GM12878 (cell line): ENCODE measurements at regions of chr11 and their contacts with region 1.

Region 1: GRCh38 chr11:119728651-119729580 is at the start of gene NECTIN1:
- DNase-seq: no peak
- ATAC-seq: peak; percentile 86
- H3K4me3 ChIP-seq: peak within 1 kb of the TSS; percentile 86
- H3K27ac ChIP-seq: peak within 1 kb of the TSS; percentile 58
- H3K4me1 ChIP-seq: peaks cover 24% of the 10 kb centered on the region
- H3K27me3 ChIP-seq: peaks cover 0 to 7% of the 10 kb centered on the region in 2 experiments; a peak in 2 of 4 replicates
- CTCF ChIP-seq: peak; percentile 69 to 94 (median 84)
- EP300 ChIP-seq: no peak
- POLR2A ChIP-seq: peak; percentile 77
- RAD21 ChIP-seq: peak; percentile 83
- polyA plus RNA-seq, gene NECTIN1: 1.4 to 1.5 TPM

Region 2: GRCh38 chr11:119599864-119600541 is 128.9 kb before region 1 on chr11:
- CTCF ChIA-PET with region 1: no interaction called
- POLR2A ChIA-PET with region 1: no interaction called
- RAD21 ChIA-PET with region 1: no interaction called
- SMC1A ChIA-PET with region 1: no interaction called
- in situ Hi-C with region 1: no loop called
- intact Hi-C with region 1: no loop called
- DNase-seq: no peak
- ATAC-seq: no peak; the same call in 1 of the 3 replicates
- H3K4me3 ChIP-seq: no peak overlapping the region
- H3K27ac ChIP-seq: no peak overlapping the region
- H3K4me1 ChIP-seq: no peaks in the 10 kb centered on the region
- H3K27me3 ChIP-seq: peaks cover 0 to 2% of the 10 kb centered on the region in 2 experiments; a peak in 2 of 4 replicates
- CTCF ChIP-seq: no peak
- EP300 ChIP-seq: no peak
- POLR2A ChIP-seq: no peak
- RAD21 ChIP-seq: no peak

Region 3: DNA sequence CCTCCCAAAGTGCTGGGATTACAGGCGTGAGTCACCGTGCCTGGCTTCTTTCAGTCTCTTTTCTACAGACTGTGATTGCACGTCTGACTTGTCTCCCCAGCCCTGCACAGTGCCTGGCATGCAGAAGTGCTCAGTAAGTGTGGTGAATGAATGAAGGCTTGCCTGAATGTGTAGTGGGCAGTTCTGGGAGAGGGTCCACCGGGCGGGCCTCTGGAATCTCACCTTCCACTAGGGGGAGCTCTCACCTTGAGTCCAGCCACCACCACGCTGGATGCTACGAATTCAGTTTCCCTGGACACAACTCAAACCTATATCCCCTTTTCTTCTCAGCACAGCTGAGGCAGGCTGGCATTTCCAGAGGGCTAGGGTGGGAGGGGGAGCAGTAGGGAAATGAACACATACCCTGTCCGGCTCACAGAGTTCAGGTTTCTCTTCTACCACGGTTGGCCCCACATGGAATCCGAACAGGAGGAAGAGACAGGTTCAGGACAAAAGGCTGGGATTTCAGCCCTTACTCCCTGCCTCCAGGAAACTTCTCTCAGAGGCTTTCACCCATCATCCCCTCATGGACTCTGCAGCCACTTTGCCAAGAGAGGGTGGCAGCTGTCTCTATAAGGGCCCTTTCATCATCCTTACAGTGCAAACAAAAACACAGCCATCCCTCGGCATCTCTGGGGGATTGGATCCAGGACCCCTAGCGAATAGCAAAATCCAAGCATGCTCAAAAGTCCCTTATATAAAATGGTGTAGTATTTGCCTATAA is 86.8 kb before region 1 on chr11:
- CTCF ChIA-PET with region 1: interaction called, 9 read pairs
- POLR2A ChIA-PET with region 1: no interaction called
- RAD21 ChIA-PET with region 1: interaction called, 12 read pairs
- SMC1A ChIA-PET with region 1: no interaction called
- in situ Hi-C with region 1: no loop called
- intact Hi-C with region 1: no loop called
- DNase-seq: no peak
- ATAC-seq: peak; percentile 83
- H3K4me3 ChIP-seq: no peak overlapping the region
- H3K27ac ChIP-seq: no peak overlapping the region
- H3K4me1 ChIP-seq: no peaks in the 10 kb centered on the region
- H3K27me3 ChIP-seq: peaks cover 3% of the 10 kb centered on the region in 2 experiments; a peak in 3 of 4 replicates
- CTCF ChIP-seq: peak; percentile 63 to 75 (median 67)
- EP300 ChIP-seq: no peak
- POLR2A ChIP-seq: no peak
- RAD21 ChIP-seq: peak; percentile 49

Region 4: GRCh38 chr11:119673759-119674336 is 55.1 kb before region 1 on chr11:
- CTCF ChIA-PET with region 1: interaction called, 214 read pairs
- POLR2A ChIA-PET with region 1: interaction called, 74 read pairs
- RAD21 ChIA-PET with region 1: interaction called, 192 read pairs
- SMC1A ChIA-PET with region 1: interaction called, 76 read pairs
- in situ Hi-C with region 1: no loop called
- intact Hi-C with region 1: loop called (anchors 1 kb)
- DNase-seq: peak; percentile 88
- ATAC-seq: peak; percentile 95
- H3K4me3 ChIP-seq: no peak overlapping the region
- H3K27ac ChIP-seq: peak overlapping the region; percentile 85
- H3K4me1 ChIP-seq: peaks cover 29% of the 10 kb centered on the region
- H3K27me3 ChIP-seq: no peaks in the 10 kb centered on the region
- CTCF ChIP-seq: peak; percentile 54 to 96 (median 67); a peak in 4 of 6 replicates
- EP300 ChIP-seq: peak; percentile 71 to 96
- POLR2A ChIP-seq: peak; percentile 62; the same call in 1 of the 2 replicates
- RAD21 ChIP-seq: peak; percentile 85

Region 5: DNA sequence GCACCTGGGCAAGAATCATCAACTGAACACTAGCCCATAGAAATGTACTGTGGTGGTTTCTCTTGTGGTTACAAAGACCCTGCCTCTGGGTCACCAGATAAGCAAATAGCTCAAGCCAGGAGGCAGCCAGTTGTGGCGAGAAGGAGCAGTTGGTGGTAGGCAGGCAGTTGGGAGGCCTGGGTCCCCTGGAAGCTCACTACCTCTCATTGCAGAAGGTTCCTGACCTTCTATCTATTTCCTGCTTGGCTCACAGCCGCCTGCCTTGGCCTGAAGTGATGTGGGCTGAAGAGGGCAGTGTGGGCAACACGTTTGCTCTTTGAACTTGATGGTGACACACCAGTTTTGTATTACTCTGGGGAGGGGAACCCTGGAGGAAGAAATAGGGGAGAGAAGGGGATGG is 34.6 kb before region 1 on chr11:
- CTCF ChIA-PET with region 1: interaction called, 57 read pairs
- POLR2A ChIA-PET with region 1: interaction called, 9 read pairs
- RAD21 ChIA-PET with region 1: interaction called, 18 read pairs
- SMC1A ChIA-PET with region 1: interaction called, 9 read pairs
- in situ Hi-C with region 1: no loop called
- intact Hi-C with region 1: no loop called
- DNase-seq: no peak
- ATAC-seq: peak; percentile 71
- H3K4me3 ChIP-seq: no peak overlapping the region
- H3K27ac ChIP-seq: no peak overlapping the region
- H3K4me1 ChIP-seq: peaks cover 25% of the 10 kb centered on the region
- H3K27me3 ChIP-seq: no peaks in the 10 kb centered on the region
- CTCF ChIP-seq: peak; percentile 17 to 39 (median 32); a peak in 4 of 6 replicates
- EP300 ChIP-seq: no peak
- POLR2A ChIP-seq: no peak
- RAD21 ChIP-seq: no peak

Region 6: GRCh38 chr11:119891055-119891768 is 162.3 kb after region 1 on chr11:
- CTCF ChIA-PET with region 1: no interaction called
- POLR2A ChIA-PET with region 1: no interaction called
- RAD21 ChIA-PET with region 1: no interaction called
- SMC1A ChIA-PET with region 1: no interaction called
- in situ Hi-C with region 1: no loop called
- intact Hi-C with region 1: no loop called
- DNase-seq: no peak
- ATAC-seq: no peak
- H3K4me3 ChIP-seq: no peak overlapping the region
- H3K27ac ChIP-seq: no peak overlapping the region
- H3K4me1 ChIP-seq: peaks cover 4% of the 10 kb centered on the region; the same call in 1 of the 2 replicates
- H3K27me3 ChIP-seq: peaks cover 1 to 3% of the 10 kb centered on the region in 2 experiments; a peak in 2 of 4 replicates
- CTCF ChIP-seq: no peak
- EP300 ChIP-seq: no peak
- POLR2A ChIP-seq: no peak
- RAD21 ChIP-seq: no peak

Region 7: GRCh38 chr11:120108154-120108865 is 379.4 kb after region 1 on chr11:
- CTCF ChIA-PET with region 1: interaction called, 17 read pairs
- POLR2A ChIA-PET with region 1: no interaction called
- RAD21 ChIA-PET with region 1: interaction called, 11 read pairs
- SMC1A ChIA-PET with region 1: interaction called, 9 read pairs
- in situ Hi-C with region 1: no loop called
- intact Hi-C with region 1: no loop called
- DNase-seq: no peak
- ATAC-seq: peak; percentile 97
- H3K4me3 ChIP-seq: no peak overlapping the region
- H3K27ac ChIP-seq: no peak overlapping the region
- H3K4me1 ChIP-seq: no peaks in the 10 kb centered on the region
- H3K27me3 ChIP-seq: peaks cover 12 to 15% of the 10 kb centered on the region in 2 experiments
- CTCF ChIP-seq: peak; percentile 99 to 100 (median 99); a peak in 5 of 6 replicates
- EP300 ChIP-seq: no peak
- POLR2A ChIP-seq: no peak
- RAD21 ChIP-seq: peak; percentile 94